Prostate gland (tissue), 2 donors: ENCODE measurements at regions of chr19 and their contacts with region 1.

Region 1: GRCh38 chr19:23395041-23395721 is at the start of gene ZNF91:
- DNase-seq: peak; percentile 98
- H3K4me3 ChIP-seq: peak within 1 kb of the TSS; percentile 61 to 78
- H3K27ac ChIP-seq: peak within 1 kb of the TSS; percentile 91 to 92
- H3K4me1 ChIP-seq: peaks cover 4% of the 10 kb centered on the region
- H3K27me3 ChIP-seq: no peaks in the 10 kb centered on the region
- CTCF ChIP-seq: no peak
- POLR2A ChIP-seq: peak; percentile 94
- total RNA-seq, gene ZNF91: 70.4 to 97.8 TPM

Region 2: DNA sequence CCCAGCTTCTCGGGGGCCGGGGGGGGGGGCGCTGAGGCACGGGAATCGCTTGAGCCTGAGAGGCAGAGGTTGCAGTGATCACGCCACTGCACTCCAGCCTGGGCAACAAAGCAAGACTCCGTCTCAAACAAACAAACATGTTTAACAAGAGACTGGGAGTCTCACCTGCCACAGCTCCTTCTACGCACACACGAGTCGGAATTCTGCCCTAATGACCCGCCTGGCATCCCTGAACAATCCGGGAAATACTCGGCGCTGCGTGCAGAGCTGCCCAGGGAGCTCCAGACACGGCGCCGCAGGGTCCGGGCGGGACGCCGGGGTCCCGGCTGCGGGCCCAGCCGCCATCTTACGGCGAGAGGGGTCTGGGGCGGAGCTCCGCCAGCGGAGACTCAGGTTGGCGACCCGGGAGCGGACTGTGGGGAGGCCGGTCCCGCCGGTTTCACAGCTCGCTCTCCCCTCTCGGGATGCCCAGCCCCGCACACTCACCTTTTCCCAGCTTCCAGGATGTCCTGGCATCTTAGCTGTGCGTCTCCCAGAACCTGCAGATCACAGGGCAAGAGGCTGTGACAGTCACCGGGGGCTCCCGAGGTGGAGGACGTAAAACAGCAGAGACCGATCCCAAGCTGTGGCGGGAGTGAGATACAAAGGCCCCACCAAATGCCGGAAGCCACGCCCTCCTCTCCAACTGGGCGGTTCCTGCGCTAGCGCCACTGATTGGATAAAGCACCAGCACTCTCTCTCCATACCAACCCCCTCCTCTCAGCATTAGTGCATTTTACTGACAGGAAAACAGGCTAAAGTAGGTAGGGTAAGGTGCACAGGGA is 121.4 kb before region 1 on chr19:
- intact Hi-C with region 1: loop called (anchors 5 kb)
- DNase-seq: peak; percentile 95
- H3K4me3 ChIP-seq: peak overlapping the region; percentile 82 to 91
- H3K27ac ChIP-seq: peak overlapping the region; percentile 78 to 88
- H3K4me1 ChIP-seq: no peaks in the 10 kb centered on the region
- H3K27me3 ChIP-seq: no peaks in the 10 kb centered on the region
- CTCF ChIP-seq: no peak
- POLR2A ChIP-seq: peak; percentile 91

Region 3: GRCh38 chr19:24033301-24033962 is 638.3 kb after region 1 on chr19:
- intact Hi-C with region 1: loop called (anchors 10 kb)
- DNase-seq: peak; percentile 94
- H3K4me3 ChIP-seq: peak overlapping the region; percentile 61 to 69
- H3K27ac ChIP-seq: peak overlapping the region; percentile 91
- H3K4me1 ChIP-seq: peaks cover 5% of the 10 kb centered on the region
- H3K27me3 ChIP-seq: no peaks in the 10 kb centered on the region
- CTCF ChIP-seq: peak in 2 of 4 experiments; percentile 14 to 28
- POLR2A ChIP-seq: peak; percentile 80